ENCODE measurements at regions of chr13 and their contacts with region 1.

Region 1: GRCh38 chr13:30715837-30716450 is 19.4 kb upstream of the ALOX5AP start:
- DNase-seq: no peak
- ATAC-seq: no peak
- H3K4me3 ChIP-seq: no peak overlapping the region
- H3K27ac ChIP-seq: no peak overlapping the region
- H3K4me1 ChIP-seq: no peaks in the 10 kb centered on the region
- H3K27me3 ChIP-seq: no peaks in the 10 kb centered on the region
- CTCF ChIP-seq: no peak
- POLR2A ChIP-seq: no peak

Region 2: GRCh38 chr13:30617315-30618185 is 98.4 kb before region 1 on chr13 and contains the start of gene USPL1:
- in situ Hi-C with region 1: no loop called
- intact Hi-C with region 1: no loop called
- DNase-seq: peak; percentile 96 to 98
- ATAC-seq: peak; percentile 84 to 87
- H3K4me3 ChIP-seq: peak within 1 kb of the TSS; percentile 81 to 91 (median 86)
- H3K27ac ChIP-seq: peak within 1 kb of the TSS; percentile 91 to 100 (median 98)
- H3K4me1 ChIP-seq: peaks cover 33 to 40% of the 10 kb centered on the region in 2 donors
- H3K27me3 ChIP-seq: no peaks in the 10 kb centered on the region
- CTCF ChIP-seq: peak; percentile 34 to 63 (median 51)
- POLR2A ChIP-seq: peak; percentile 93 to 96
- total RNA-seq, gene USPL1: 14.2 to 18.4 (median 15.6) TPM

Region 3: DNA sequence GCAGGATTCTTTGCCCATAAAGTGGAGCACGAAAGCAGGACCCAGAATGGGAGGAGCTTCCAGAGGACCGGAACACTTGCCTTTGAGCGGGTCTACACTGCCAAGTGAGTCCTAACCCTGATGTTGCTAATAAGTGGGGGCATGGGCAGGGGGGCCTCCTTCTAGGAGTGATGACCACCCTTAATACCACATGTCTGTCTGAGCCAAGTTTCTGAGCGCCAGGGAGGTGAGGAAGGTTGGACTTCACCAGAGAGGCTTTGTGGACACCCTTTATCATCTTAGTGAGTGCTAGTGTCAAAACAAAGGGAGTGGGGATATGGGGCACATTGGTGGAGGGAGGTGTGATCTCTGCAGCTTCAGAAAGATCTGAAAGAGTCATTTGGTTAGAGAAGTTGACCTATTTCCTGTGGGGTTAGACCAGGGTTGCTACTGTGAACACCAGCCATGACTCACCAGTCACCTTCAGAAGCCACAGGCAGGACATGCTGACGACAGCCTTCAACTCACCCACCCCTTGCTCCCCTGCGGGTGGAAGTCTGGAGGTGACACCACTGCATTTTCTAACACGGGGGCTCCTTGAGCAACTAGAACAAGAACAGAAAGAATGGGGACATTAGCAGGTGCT is 28.2 kb after region 1 on chr13:
- in situ Hi-C with region 1: no loop called
- intact Hi-C with region 1: loop called (anchors 1 kb)
- DNase-seq: peak in 1 of 2 donors; percentile 35
- ATAC-seq: peak in 1 of 2 donors; percentile 27
- H3K4me3 ChIP-seq: no peak overlapping the region
- H3K27ac ChIP-seq: peak overlapping the region in 2 of 4 donors; percentile 28 to 31
- H3K4me1 ChIP-seq: peaks cover 35 to 37% of the 10 kb centered on the region in 2 donors
- H3K27me3 ChIP-seq: no peaks in the 10 kb centered on the region
- CTCF ChIP-seq: no peak
- POLR2A ChIP-seq: no peak

Measured in gastrocnemius medialis (tissue), 4 donors.